Mammary epithelial cell (primary cell): ENCODE measurements at regions of chr10 and their contacts with region 1.

Region 1: DNA sequence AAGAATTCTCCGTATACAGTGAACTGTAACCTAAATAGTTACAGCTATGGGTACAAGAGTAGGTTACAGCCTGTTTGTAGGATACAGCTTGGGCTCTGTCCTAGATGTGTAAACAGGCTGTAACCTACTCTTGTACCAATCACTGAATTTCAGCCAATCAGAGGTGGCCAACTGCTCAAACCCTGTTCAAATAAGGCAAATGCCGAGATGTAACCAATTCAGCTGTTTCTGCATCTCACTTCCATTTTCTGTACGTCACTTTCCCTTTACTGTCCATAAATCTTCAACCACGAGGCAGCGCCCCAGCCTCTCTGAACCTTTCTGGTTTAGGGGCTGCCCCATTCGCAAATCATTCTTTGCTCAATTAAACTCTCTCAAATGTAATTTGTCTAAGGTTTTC is 8.3 kb upstream of the MMP21 start:
- DNase-seq: no peak
- H3K4me3 ChIP-seq: no peak overlapping the region
- H3K27ac ChIP-seq: no peak overlapping the region
- H3K4me1 ChIP-seq: no peaks in the 10 kb centered on the region
- H3K27me3 ChIP-seq: no peaks in the 10 kb centered on the region
- CTCF ChIP-seq: no peak

Region 2: GRCh38 chr10:125744909-125745308 is 39.0 kb before region 1 on chr10:
- CTCF ChIA-PET with region 1: no interaction called
- dilution Hi-C with region 1: loop called (anchors 5 kb)
- in situ Hi-C with region 1: no loop called
- intact Hi-C with region 1: no loop called
- DNase-seq: no peak
- H3K4me3 ChIP-seq: no peak overlapping the region
- H3K27ac ChIP-seq: no peak overlapping the region
- H3K4me1 ChIP-seq: no peaks in the 10 kb centered on the region
- H3K27me3 ChIP-seq: no peaks in the 10 kb centered on the region
- CTCF ChIP-seq: no peak

Region 3: GRCh38 chr10:126119594-126119993 is 335.6 kb after region 1 on chr10:
- CTCF ChIA-PET with region 1: no interaction called
- dilution Hi-C with region 1: no loop called
- in situ Hi-C with region 1: no loop called
- intact Hi-C with region 1: no loop called
- DNase-seq: no peak
- H3K4me3 ChIP-seq: no peak overlapping the region
- H3K27ac ChIP-seq: no peak overlapping the region
- H3K4me1 ChIP-seq: no peaks in the 10 kb centered on the region
- H3K27me3 ChIP-seq: no peaks in the 10 kb centered on the region
- CTCF ChIP-seq: no peak